Activated B cell treated with CpG ODN at 0.5 μM for 24 hours (primary cell): ENCODE measurements at regions of chr17 and their contacts with region 1.

Region 1: GRCh38 chr17:1716076-1716995 is 6.2 kb upstream of the TLCD2 start:
- DNase-seq: peak; percentile 100
- ATAC-seq: peak; percentile 87
- H3K4me3 Mint-ChIP-seq: peak overlapping the region; percentile 91
- H3K27ac Mint-ChIP-seq: peak overlapping the region; percentile 94
- H3K4me1 Mint-ChIP-seq: peaks cover 28% of the 10 kb centered on the region
- H3K27me3 Mint-ChIP-seq: peaks cover 11% of the 10 kb centered on the region
- CTCF ChIP-seq: no peak

Region 2: DNA sequence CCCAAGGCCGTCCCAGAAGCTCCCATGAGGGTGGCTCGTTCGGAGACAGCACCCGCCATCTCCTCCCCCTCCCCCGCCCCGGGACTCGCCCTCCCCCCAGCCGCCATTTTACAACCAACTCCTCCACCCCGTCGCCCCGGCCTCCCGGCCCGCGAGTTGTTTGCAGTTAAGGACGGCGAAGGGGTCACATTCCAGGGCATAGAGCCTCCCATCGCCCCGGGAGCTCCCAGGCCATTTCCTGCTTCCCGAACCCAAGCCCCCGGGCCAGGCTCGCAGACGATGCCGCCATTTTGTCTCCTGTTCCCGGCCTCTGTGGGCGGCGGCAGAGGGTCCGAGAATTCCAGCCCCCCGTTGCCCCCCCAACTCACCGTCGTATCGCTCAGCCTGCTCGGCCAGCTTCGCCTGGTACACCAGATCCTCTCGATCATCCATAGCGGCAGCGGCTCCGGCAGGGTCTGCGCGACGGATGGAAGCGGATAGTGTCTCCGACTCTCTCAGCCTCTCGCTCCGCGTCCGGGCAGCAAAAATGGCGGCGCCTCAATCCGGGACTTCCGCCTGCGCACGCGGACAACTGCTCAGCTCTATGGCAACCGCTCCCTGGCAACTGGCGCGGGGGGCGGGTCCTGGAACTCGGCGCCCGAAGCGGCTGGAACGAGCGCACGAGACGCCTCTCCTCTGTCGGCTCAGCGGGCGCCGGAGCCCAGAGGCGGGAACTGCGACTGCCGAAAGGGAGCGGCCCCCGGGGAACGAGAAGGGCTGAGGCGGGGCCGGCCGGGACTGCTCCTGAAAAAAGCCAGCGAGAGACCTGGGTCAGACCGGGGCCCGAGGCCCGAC is 316.4 kb before region 1 on chr17 and contains the start of gene YWHAE:
- CTCF ChIA-PET with region 1: no interaction called
- POLR2A ChIA-PET with region 1: interaction called, 4 read pairs
- intact Hi-C with region 1: loop called (anchors 2 kb)
- DNase-seq: peak; percentile 94
- ATAC-seq: peak; percentile 85
- H3K4me3 Mint-ChIP-seq: peak within 1 kb of the TSS; percentile 98
- H3K27ac Mint-ChIP-seq: peak within 1 kb of the TSS; percentile 98
- H3K4me1 Mint-ChIP-seq: peaks cover 44% of the 10 kb centered on the region
- H3K27me3 Mint-ChIP-seq: no peaks in the 10 kb centered on the region
- CTCF ChIP-seq: no peak
- total RNA-seq, gene YWHAE: 253 and 263 TPM in 2 replicates

Region 3: DNA sequence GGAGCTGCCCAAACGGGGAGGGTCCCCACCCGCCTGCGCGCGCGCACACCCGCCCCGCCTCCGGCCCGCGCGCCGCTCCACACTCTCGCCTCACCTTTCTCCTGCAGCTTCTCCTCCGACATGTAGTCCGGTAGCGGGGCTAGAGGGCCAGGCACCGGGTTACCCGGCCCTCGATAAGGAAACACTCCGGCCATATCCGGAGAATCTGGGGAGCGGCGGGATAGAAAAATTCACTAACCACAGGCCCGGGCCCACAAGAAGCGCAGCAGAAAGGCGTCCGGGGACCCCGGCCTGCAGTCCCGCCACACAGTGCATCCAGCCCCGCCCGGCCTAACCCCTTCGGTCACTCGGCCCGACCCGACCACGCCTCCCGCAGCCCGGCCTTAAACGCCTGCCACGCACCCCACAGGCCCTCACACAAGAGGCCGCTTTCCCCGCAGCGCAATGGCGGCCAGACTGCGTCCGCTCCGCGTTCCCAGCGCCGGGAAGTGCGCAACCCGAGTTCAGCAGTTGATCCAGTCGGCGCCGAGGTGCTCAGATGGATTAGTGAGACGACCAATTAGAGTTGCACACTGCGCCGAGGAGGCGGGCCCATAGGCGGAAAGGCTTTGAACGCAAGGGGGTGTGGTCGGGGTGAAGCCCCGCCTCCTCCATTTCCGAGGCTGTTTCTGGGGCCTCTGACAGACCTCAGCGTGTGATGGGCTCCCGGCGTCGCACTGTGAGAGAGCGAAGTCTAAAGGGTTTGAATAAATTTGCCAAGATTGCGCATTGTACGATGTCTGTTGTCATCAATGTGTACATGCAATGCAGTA is 31.8 kb before region 1 on chr17 and contains the start of gene PRPF8:
- CTCF ChIA-PET with region 1: interaction called, 4 read pairs
- POLR2A ChIA-PET with region 1: interaction called, 43 read pairs
- intact Hi-C with region 1: loop called (anchors 1 kb)
- DNase-seq: peak; percentile 95
- ATAC-seq: peak; percentile 99
- H3K4me3 Mint-ChIP-seq: peak within 1 kb of the TSS; percentile 100
- H3K27ac Mint-ChIP-seq: peak within 1 kb of the TSS; percentile 96
- H3K4me1 Mint-ChIP-seq: peaks cover 33% of the 10 kb centered on the region
- H3K27me3 Mint-ChIP-seq: no peaks in the 10 kb centered on the region
- CTCF ChIP-seq: no peak
- total RNA-seq, gene PRPF8: 401 and 442 TPM in 2 replicates

Region 4: DNA sequence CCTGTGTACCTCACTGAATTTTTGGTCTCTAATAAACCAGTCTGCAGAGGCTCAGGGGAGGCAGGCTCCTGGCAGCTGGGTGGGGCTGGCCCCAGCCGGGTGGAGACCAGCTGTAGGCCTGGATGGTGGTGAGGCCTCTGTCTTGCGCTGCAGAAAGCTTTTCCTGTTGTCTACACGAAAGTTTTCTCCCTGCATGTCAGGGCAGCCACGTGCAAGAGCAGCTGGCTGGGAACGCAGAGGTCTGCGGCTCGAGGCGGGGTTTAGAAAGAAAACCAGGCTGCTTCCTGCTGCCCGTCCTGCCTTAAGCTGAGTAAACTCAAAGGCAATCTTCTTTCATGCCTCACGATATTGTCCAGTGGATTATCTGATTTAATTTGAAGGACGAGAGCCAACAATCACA is 47.9 kb after region 1 on chr17:
- CTCF ChIA-PET with region 1: interaction called, 6 read pairs
- POLR2A ChIA-PET with region 1: interaction called, 47 read pairs
- intact Hi-C with region 1: no loop called
- DNase-seq: peak; percentile 41
- ATAC-seq: peak; percentile 85
- H3K4me3 Mint-ChIP-seq: peak overlapping the region; percentile 53
- H3K27ac Mint-ChIP-seq: peak overlapping the region; percentile 72
- H3K4me1 Mint-ChIP-seq: peaks cover 46% of the 10 kb centered on the region
- H3K27me3 Mint-ChIP-seq: no peaks in the 10 kb centered on the region
- CTCF ChIP-seq: no peak

Region 5: DNA sequence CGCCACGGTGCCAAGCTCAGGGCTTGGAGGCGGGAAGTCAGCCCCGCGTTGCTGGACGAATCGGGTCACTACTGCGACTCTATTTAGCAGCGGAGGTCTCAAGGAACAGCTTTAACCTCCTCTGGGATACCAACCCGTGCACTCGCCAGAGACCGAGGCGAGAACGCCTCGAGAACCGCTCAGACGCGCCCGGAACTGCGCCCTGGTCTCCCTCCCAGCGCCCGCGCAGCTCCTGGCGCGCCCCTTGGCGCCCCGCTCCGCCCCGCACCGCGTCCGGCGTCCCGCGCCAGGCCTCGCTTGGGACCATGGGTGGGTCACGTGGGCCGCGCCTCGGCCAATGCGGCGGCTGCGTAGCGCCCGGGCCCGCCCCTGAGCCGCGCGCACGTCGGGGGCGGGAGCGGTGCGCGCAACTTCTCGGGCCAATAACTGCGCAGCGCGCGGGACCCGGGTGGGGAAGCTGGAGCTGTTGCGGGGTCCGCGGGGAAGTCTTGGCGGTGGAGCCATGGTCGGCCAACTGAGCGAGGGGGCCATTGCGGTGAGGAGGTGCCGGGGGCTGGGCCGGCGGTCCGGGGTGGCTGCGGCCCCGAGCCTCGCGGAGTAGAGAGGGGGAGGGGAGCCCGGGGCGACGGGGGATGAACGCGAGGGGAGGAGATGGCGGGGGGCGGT is 113.4 kb after region 1 on chr17 and contains the starts of genes RPA1 and SMYD4:
- CTCF ChIA-PET with region 1: interaction called, 5 read pairs
- POLR2A ChIA-PET with region 1: interaction called, 22 read pairs
- intact Hi-C with region 1: loop called (anchors 1 kb)
- DNase-seq: peak; percentile 94
- ATAC-seq: peak; percentile 94
- H3K4me3 Mint-ChIP-seq: peak within 1 kb of the TSS; percentile 91
- H3K27ac Mint-ChIP-seq: peak within 1 kb of the TSS; percentile 83
- H3K4me1 Mint-ChIP-seq: peaks cover 44% of the 10 kb centered on the region
- H3K27me3 Mint-ChIP-seq: no peaks in the 10 kb centered on the region
- CTCF ChIP-seq: no peak
- total RNA-seq, gene RPA1: 99.8 and 109 TPM in 2 replicates
- total RNA-seq, gene SMYD4: 19.9 and 21.8 TPM in 2 replicates

Region 6: DNA sequence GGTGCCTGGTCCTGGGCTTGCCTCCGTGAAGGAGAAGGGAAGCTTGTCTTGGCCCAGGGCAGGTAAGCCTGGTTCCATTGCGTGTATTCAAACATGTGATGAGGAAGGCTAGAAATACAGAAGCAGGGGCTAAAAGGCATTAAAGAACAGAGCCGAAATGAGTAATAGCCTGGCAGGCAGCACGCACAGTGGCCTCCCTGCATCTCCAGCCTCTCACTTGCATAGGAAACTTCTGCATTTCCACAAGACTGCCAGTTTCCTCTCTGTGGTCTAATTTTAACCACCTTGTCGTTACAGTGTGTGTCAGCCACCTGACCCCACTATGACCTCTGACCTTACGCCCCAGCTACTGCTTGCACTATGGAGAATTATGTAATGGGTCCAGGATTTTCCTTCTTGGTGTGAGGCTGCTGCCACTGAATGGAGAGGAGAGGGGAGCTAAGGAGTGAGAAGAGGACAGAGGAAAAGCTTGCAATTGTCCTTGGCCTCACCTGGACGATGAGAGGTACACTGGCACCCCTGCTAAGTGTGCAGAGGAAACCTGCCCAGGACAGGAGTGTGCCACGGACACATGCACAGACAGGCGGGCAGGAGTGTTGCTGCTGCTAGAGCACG is 371.4 kb after region 1 on chr17:
- CTCF ChIA-PET with region 1: no interaction called
- POLR2A ChIA-PET with region 1: interaction called, 5 read pairs
- intact Hi-C with region 1: loop called (anchors 1 kb)
- DNase-seq: peak; percentile 48
- ATAC-seq: peak; percentile 63
- H3K4me3 Mint-ChIP-seq: peak overlapping the region; percentile 60
- H3K27ac Mint-ChIP-seq: peak overlapping the region; percentile 72
- H3K4me1 Mint-ChIP-seq: peaks cover 80% of the 10 kb centered on the region
- H3K27me3 Mint-ChIP-seq: no peaks in the 10 kb centered on the region
- CTCF ChIP-seq: no peak

Region 7: DNA sequence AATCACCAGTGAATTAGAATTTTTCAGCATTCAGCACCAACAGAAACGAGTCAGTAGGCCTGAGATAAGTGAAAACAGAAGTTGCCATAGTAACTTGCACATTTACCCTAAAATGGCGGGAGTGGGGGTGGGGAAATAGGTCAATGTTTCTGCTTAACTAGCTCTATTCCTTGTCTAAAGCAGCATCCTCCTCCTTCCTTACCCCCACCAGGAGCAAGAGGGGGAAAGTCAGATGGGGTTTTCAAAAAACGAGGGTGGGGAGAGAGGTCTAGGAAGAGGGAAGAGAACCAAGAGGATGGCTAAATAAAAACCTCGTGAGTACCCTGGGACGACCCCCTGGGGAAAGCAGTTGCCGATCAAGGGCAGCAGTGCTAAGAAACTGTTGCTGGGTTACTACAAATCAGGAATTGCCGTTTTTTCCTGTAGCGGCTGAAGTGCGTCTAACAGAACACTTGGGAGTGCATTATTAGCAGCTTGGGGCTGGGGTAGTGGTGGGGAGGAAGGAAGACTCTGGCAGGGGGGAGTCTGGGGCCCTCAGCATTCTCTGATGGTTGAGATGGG is 718.9 kb after region 1 on chr17:
- CTCF ChIA-PET with region 1: no interaction called
- POLR2A ChIA-PET with region 1: no interaction called
- intact Hi-C with region 1: no loop called
- DNase-seq: no peak
- ATAC-seq: no peak
- H3K4me3 Mint-ChIP-seq: no peak overlapping the region
- H3K27ac Mint-ChIP-seq: no peak overlapping the region
- H3K4me1 Mint-ChIP-seq: no peaks in the 10 kb centered on the region
- H3K27me3 Mint-ChIP-seq: no peaks in the 10 kb centered on the region
- CTCF ChIP-seq: no peak